A549 (cell line): ENCODE measurements at regions of chr17 and their contacts with region 1.

Region 1: DNA sequence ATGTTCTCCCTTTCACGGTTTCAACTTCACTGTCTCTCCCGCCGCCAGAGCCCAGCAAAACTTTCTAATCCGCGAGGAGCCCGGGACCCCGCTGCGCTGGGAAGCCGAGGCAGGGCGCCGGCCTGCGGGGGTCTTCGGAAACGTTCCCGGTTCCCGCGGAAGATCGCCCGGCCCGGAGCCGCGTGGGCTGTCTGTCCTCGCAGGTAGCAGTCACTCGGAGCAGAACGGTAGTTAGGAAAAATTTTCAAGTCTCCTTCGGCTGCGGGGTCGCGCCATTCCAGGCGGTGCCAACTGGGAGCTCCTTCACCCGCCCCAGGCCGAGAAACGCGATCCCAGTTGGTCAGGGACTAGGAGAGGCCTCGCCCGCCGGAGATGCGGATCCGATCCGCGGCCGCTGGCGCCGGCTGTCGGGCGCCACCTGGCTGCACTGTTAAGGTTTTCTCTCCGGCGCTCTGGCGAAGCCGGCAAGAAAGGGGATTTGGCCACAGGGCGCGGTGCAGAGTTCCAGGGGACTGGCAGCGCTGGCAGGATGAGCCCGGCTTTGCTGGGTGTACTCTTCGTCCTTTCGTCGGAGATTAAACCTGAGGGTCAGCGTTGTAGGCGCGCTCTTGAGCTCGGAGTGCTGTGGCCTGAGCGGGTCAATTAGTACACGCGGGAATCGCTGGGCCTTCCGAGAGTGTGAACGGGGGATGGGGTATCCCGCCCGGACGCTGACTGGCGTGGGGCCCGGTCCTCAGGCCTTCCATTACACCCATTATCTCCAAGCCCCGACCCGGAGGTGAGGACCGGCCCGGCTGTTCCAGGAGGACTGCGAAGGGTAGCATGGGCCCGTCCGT is 135.4 kb downstream of the KCNJ12 start:
- DNase-seq: peak; percentile 84 to 87
- ATAC-seq: peak; percentile 93 to 98
- H3K4me3 ChIP-seq: peak overlapping the region; percentile 43
- H3K27ac ChIP-seq: peak overlapping the region; percentile 24 to 79; a peak in 5 of 6 replicates
- H3K4me1 ChIP-seq: no peaks in the 10 kb centered on the region; the same call in 2 of the 3 replicates
- CTCF ChIP-seq: peak; percentile 86
- EP300 ChIP-seq: no peak
- POLR2A ChIP-seq: no peak
- RAD21 ChIP-seq: peak; percentile 69 to 86

Region 2: GRCh38 chr17:21126645-21127510 is 384.7 kb before region 1 on chr17 and contains the start of gene DHRS7B:
- CTCF ChIA-PET with region 1: interaction called, 60 read pairs
- POLR2A ChIA-PET with region 1: no interaction called
- DNase-seq: peak; percentile 97 to 99
- ATAC-seq: peak; percentile 97 to 98
- H3K4me3 ChIP-seq: peak within 1 kb of the TSS; percentile 83
- H3K27ac ChIP-seq: peak within 1 kb of the TSS; percentile 79 to 90
- H3K4me1 ChIP-seq: peaks cover 13% of the 10 kb centered on the region; the same call in 2 of the 3 replicates
- CTCF ChIP-seq: no peak
- EP300 ChIP-seq: no peak
- POLR2A ChIP-seq: peak; percentile 89
- RAD21 ChIP-seq: no peak
- polyA plus RNA-seq, gene DHRS7B: 25.4 and 31.7 TPM in 2 replicates

Region 3: DNA sequence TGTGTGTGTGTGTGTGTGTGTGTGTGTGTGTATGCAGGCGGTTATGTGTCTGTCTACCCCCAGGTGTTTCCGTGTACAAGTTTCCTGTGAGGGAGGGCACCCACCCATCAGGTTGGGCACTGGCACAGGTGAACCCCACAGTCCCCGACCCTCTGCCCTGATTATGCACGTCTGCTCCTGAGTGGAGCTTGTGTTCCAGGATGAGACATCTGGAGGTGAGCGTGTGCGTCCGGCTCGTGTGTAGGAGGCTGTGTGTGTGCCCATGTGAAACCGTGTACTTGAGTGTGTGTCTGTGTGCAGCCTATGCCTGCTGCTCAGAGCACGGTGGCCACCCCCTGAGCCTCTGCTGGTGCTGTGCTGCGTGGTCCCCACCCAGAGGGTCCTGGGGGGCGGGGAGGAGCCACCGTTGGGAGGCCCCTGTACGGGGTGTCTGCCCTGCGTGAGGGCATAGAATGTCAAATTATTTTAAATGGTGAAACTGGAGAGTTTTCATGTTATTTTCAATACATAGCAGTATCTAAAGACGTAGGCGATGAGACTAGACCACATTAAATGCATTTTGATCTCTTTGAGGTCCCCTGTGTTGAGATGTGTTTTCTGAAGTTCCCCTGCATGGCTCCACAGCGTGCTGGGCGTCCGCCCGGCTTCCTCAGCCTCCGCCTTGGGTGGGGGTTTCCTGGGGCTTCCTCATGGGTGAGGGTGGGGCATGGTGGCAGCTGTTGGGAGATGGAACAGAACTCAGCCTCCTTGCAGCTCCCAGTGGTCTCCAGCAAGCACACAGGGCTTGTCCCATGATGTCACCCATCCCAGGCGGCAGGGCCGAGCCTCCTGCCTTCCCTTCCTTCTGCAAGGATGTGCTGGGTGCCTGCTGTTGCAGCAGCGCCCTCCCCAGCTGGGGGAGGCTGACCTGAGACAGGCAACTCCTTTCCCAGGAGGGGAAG is 92.0 kb before region 1 on chr17:
- CTCF ChIA-PET with region 1: no interaction called
- POLR2A ChIA-PET with region 1: no interaction called
- DNase-seq: no peak
- ATAC-seq: peak in 1 of 2 experiments; percentile 10; a peak in 2 of 6 replicates
- H3K4me3 ChIP-seq: no peak overlapping the region
- H3K27ac ChIP-seq: no peak overlapping the region
- H3K4me1 ChIP-seq: no peaks in the 10 kb centered on the region
- CTCF ChIP-seq: no peak
- EP300 ChIP-seq: no peak
- POLR2A ChIP-seq: no peak
- RAD21 ChIP-seq: no peak

Region 4: GRCh38 chr17:21463204-21463661 is 48.3 kb before region 1 on chr17:
- CTCF ChIA-PET with region 1: interaction called, 189 read pairs
- POLR2A ChIA-PET with region 1: no interaction called
- DNase-seq: no peak
- ATAC-seq: no peak
- H3K4me3 ChIP-seq: no peak overlapping the region
- H3K27ac ChIP-seq: no peak overlapping the region
- H3K4me1 ChIP-seq: no peaks in the 10 kb centered on the region
- CTCF ChIP-seq: no peak
- EP300 ChIP-seq: no peak
- POLR2A ChIP-seq: no peak
- RAD21 ChIP-seq: no peak

Region 5: DNA sequence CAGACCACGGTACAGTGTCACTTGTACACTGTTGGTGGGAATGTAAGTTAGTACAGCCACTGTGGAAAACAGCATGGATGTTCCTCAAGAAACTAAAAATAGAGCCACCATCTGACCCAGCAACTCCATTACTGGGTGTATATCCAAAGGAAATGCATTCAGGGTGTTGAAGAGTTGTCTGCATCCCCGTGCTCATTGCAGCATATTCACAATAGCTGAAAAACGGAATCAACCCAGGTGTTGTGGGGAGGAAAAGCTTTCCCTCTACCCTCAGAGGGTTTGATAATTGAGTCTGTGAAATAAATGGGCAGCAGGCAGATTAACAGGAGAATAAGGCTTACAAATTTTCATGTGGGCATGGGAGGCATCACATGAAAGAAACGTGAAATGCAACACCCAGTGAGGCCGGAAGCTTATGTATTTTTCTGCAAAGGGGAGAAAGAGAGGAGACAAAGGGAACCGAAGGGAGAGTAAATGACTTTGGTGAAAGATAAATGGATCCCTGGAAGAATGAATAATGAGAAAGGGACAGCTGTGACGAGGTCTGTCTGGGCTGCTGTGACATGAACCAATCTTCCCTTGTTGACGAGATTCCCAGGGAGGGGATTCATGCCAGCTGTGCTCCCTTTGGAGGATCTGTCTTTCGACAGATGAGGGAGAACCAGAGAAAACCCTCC is 29.3 kb before region 1 on chr17:
- CTCF ChIA-PET with region 1: interaction called, 11 read pairs
- POLR2A ChIA-PET with region 1: no interaction called
- DNase-seq: no peak
- ATAC-seq: no peak
- H3K4me3 ChIP-seq: no peak overlapping the region
- H3K27ac ChIP-seq: no peak overlapping the region
- H3K4me1 ChIP-seq: no peaks in the 10 kb centered on the region
- CTCF ChIP-seq: no peak
- EP300 ChIP-seq: no peak
- POLR2A ChIP-seq: no peak
- RAD21 ChIP-seq: no peak

Region 6: GRCh38 chr17:21524211-21524591 is 12.6 kb after region 1 on chr17:
- CTCF ChIA-PET with region 1: interaction called, 69 read pairs
- POLR2A ChIA-PET with region 1: no interaction called
- DNase-seq: no peak
- ATAC-seq: no peak
- H3K4me3 ChIP-seq: no peak overlapping the region
- H3K27ac ChIP-seq: no peak overlapping the region
- H3K4me1 ChIP-seq: no peaks in the 10 kb centered on the region
- CTCF ChIP-seq: no peak
- EP300 ChIP-seq: no peak
- POLR2A ChIP-seq: no peak
- RAD21 ChIP-seq: no peak

Region 7: GRCh38 chr17:21549107-21549687 is 37.6 kb after region 1 on chr17:
- CTCF ChIA-PET with region 1: interaction called, 56 read pairs
- POLR2A ChIA-PET with region 1: no interaction called
- DNase-seq: no peak
- ATAC-seq: no peak
- H3K4me3 ChIP-seq: no peak overlapping the region
- H3K27ac ChIP-seq: no peak overlapping the region
- H3K4me1 ChIP-seq: peaks cover 21% of the 10 kb centered on the region; the same call in 2 of the 3 replicates
- CTCF ChIP-seq: no peak
- EP300 ChIP-seq: no peak
- POLR2A ChIP-seq: no peak
- RAD21 ChIP-seq: no peak